ENCODE measurements at regions of chr6 and their contacts with region 1.

Region 1: GRCh38 chr6:85460921-85461797 is 11.3 kb downstream of the NT5E start:
- DNase-seq: peak; percentile 66
- ATAC-seq: peak; percentile 31
- H3K4me3 Mint-ChIP-seq: peak overlapping the region; percentile 21
- H3K27ac Mint-ChIP-seq: peak overlapping the region; percentile 88
- H3K4me1 Mint-ChIP-seq: peaks cover 89% of the 10 kb centered on the region
- H3K27me3 Mint-ChIP-seq: peaks cover 5% of the 10 kb centered on the region

Region 2: GRCh38 chr6:85360794-85361642 is 100.1 kb before region 1 on chr6:
- CTCF ChIA-PET with region 1: interaction called, 3 read pairs
- POLR2A ChIA-PET with region 1: interaction called, 3 read pairs
- intact Hi-C with region 1: loop called in 1 of 2 experiments (anchors 1 kb)
- DNase-seq: no peak
- ATAC-seq: peak; percentile 69
- H3K4me3 Mint-ChIP-seq: no peak overlapping the region
- H3K27ac Mint-ChIP-seq: no peak overlapping the region
- H3K4me1 Mint-ChIP-seq: peaks cover 7% of the 10 kb centered on the region
- H3K27me3 Mint-ChIP-seq: peaks cover 6% of the 10 kb centered on the region

Region 3: GRCh38 chr6:85449818-85450759 is 11.1 kb before region 1 on chr6 and contains the start of gene NT5E:
- CTCF ChIA-PET with region 1: interaction called, 13 read pairs
- POLR2A ChIA-PET with region 1: interaction called, 13 read pairs
- intact Hi-C with region 1: loop called (anchors 1 kb)
- DNase-seq: peak; percentile 74
- ATAC-seq: peak; percentile 72
- H3K4me3 Mint-ChIP-seq: peak within 1 kb of the TSS; percentile 81
- H3K27ac Mint-ChIP-seq: peak within 1 kb of the TSS; percentile 87
- H3K4me1 Mint-ChIP-seq: peaks cover 53% of the 10 kb centered on the region
- H3K27me3 Mint-ChIP-seq: peaks cover 49% of the 10 kb centered on the region
- total RNA-seq, gene NT5E: 3.8 to 4.9 TPM

Region 4: GRCh38 chr6:85506441-85507093 is 45.4 kb after region 1 on chr6:
- CTCF ChIA-PET with region 1: no interaction called
- POLR2A ChIA-PET with region 1: interaction called, 4 read pairs
- intact Hi-C with region 1: loop called in 1 of 2 experiments (anchors 1 kb)
- DNase-seq: peak; percentile 47
- ATAC-seq: peak; percentile 90
- H3K4me3 Mint-ChIP-seq: no peak overlapping the region
- H3K27ac Mint-ChIP-seq: no peak overlapping the region
- H3K4me1 Mint-ChIP-seq: peaks cover 7% of the 10 kb centered on the region
- H3K27me3 Mint-ChIP-seq: no peaks in the 10 kb centered on the region

Region 5: GRCh38 chr6:85642774-85643536 is 181.8 kb after region 1 on chr6 and contains the start of gene SYNCRIP:
- CTCF ChIA-PET with region 1: no interaction called
- POLR2A ChIA-PET with region 1: no interaction called
- intact Hi-C with region 1: loop called in 1 of 2 experiments (anchors 1 kb)
- DNase-seq: peak; percentile 99
- ATAC-seq: peak; percentile 82
- H3K4me3 Mint-ChIP-seq: peak within 1 kb of the TSS; percentile 88
- H3K27ac Mint-ChIP-seq: peak within 1 kb of the TSS; percentile 99
- H3K4me1 Mint-ChIP-seq: peaks cover 45% of the 10 kb centered on the region
- H3K27me3 Mint-ChIP-seq: no peaks in the 10 kb centered on the region
- total RNA-seq, gene SYNCRIP: 156 to 191 TPM

Region 6: DNA sequence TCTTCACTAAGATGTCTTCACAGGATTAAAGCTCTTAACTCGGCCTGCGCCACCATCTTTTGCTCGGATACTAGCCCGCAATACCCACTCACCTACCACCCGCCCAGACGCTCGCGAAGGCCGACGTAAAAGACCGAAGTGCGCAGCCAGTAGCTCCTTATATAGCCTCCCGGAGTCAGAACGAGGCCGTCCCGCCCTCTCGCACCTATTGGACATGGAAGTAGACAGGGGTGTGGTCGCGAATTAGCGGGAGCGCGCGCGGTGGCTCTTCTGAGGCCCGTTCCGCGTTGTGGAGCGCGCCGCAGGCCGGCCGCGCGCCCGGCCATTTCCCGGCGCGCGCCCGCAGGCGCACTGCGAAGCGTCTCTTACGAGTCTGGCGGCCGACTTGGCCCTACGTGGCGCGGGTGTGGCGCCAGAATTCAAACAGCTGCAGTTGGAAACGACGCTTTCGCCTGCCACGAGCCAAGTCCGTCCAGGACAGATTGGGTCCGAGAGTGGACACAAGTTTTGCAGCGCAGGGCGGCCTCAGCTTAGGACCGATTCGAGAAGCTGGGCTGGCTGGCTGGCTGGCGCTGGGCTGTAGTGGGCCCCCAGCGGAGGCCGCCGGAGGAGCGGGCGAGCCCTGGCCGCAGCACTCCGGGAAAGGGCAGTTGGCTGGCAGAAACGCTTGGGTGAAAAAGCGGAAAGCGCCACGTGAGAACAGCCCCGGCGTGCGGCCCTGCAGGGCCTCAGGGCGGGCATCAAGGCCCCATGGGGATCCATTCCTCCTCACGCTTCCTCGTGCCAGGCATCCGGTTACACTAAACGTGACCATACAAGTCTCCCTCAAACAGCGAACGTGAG is 217.7 kb after region 1 on chr6:
- CTCF ChIA-PET with region 1: no interaction called
- POLR2A ChIA-PET with region 1: no interaction called
- intact Hi-C with region 1: loop called (anchors 2 to 5 kb)
- DNase-seq: peak; percentile 98
- ATAC-seq: peak; percentile 87
- H3K4me3 Mint-ChIP-seq: peak overlapping the region; percentile 90
- H3K27ac Mint-ChIP-seq: peak overlapping the region; percentile 93
- H3K4me1 Mint-ChIP-seq: peaks cover 33% of the 10 kb centered on the region
- H3K27me3 Mint-ChIP-seq: no peaks in the 10 kb centered on the region

Region 7: GRCh38 chr6:86256615-86257187 is 795.5 kb after region 1 on chr6:
- CTCF ChIA-PET with region 1: no interaction called
- POLR2A ChIA-PET with region 1: no interaction called
- intact Hi-C with region 1: no loop called
- DNase-seq: no peak
- ATAC-seq: no peak
- H3K4me3 Mint-ChIP-seq: no peak overlapping the region
- H3K27ac Mint-ChIP-seq: no peak overlapping the region
- H3K4me1 Mint-ChIP-seq: no peaks in the 10 kb centered on the region
- H3K27me3 Mint-ChIP-seq: no peaks in the 10 kb centered on the region

Measured in activated CD4-positive, alpha-beta T cell treated with anti-CD3 and anti-CD28 coated beads for 36 hours (primary cell).